Aorta (tissue), 5 donors: ENCODE measurements at regions of chr6 and their contacts with region 1.

Region 1: GRCh38 chr6:118387764-118388701 is 160.1 kb upstream of the PLN start:
- DNase-seq: no peak
- ATAC-seq: no peak
- H3K4me3 ChIP-seq: peak overlapping the region in 1 of 2 donors; percentile 10
- H3K27ac ChIP-seq: no peak overlapping the region
- H3K4me1 ChIP-seq: peaks cover 0 to 4% of the 10 kb centered on the region in 2 donors
- H3K27me3 ChIP-seq: no peaks in the 10 kb centered on the region

Region 2: DNA sequence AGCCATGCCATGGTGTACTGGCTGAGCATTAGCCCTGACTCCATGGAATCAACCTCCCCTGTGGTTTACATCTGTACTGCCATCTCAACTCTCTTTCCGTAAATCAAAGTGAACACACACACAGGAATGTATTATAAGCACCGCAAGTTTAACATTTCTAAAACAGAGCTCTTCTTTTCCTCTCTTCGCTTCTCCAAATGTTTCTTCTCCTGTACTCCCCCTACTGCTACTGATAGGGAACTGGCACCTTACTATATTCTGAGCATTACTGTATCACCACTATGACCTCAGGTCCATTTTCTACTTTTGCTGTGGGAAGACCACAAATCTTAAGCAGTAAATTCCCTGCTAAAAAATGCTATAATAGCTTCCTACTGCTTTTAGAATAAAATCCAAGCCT is 611.6 kb before region 1 on chr6:
- intact Hi-C with region 1: no loop called
- DNase-seq: no peak
- ATAC-seq: no peak
- H3K4me3 ChIP-seq: no peak overlapping the region
- H3K27ac ChIP-seq: no peak overlapping the region
- H3K4me1 ChIP-seq: no peaks in the 10 kb centered on the region
- H3K27me3 ChIP-seq: no peaks in the 10 kb centered on the region

Region 3: GRCh38 chr6:118298476-118299427 is 89.3 kb before region 1 on chr6:
- intact Hi-C with region 1: loop called in 1 of 2 experiments (anchors 10 kb)
- DNase-seq: no peak
- ATAC-seq: peak; percentile 2
- H3K4me3 ChIP-seq: no peak overlapping the region
- H3K27ac ChIP-seq: peak overlapping the region; percentile 88 to 91
- H3K4me1 ChIP-seq: peaks cover 5 to 6% of the 10 kb centered on the region in 2 donors
- H3K27me3 ChIP-seq: no peaks in the 10 kb centered on the region

Region 4: GRCh38 chr6:118325220-118325860 is 62.7 kb before region 1 on chr6:
- intact Hi-C with region 1: loop called in 1 of 2 experiments (anchors 5 kb)
- DNase-seq: peak; percentile 76 to 85
- ATAC-seq: peak; percentile 70
- H3K4me3 ChIP-seq: no peak overlapping the region
- H3K27ac ChIP-seq: peak overlapping the region in 1 of 2 donors; percentile 58
- H3K4me1 ChIP-seq: peaks cover 2 to 13% of the 10 kb centered on the region in 2 donors
- H3K27me3 ChIP-seq: no peaks in the 10 kb centered on the region

Region 5: DNA sequence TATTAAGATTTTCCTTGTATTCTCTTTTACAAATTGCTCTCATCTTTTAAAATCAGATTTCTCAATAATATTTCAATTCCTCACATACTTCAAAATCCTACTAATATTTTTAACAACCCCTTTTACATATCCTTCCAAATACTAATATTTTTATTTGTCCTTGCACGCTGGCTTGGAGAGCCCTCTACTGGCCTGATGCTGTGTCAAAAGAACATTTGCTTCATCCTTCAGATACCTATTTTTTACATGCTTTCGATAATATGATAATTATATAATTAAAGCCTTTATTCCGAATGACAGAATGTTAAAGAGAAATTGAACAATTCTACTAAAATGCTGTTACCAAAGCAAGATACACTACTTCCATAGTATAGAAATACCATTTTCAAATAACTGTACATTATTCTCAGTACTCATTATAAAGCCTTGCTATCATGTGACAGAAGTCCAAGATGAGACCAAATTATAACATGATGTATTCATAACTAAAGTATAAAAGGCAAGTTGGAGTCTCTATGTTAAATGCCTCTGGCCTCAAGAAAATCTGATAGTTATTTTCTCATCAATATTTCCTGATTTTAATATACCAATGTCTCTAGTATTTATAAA is 121.1 kb after region 1 on chr6:
- intact Hi-C with region 1: loop called in 1 of 2 experiments (anchors 10 kb)
- DNase-seq: no peak
- ATAC-seq: no peak
- H3K4me3 ChIP-seq: no peak overlapping the region
- H3K27ac ChIP-seq: no peak overlapping the region
- H3K4me1 ChIP-seq: peaks cover 2 to 3% of the 10 kb centered on the region in 2 donors
- H3K27me3 ChIP-seq: no peaks in the 10 kb centered on the region

Region 6: GRCh38 chr6:118618679-118619377 is 230.8 kb after region 1 on chr6:
- intact Hi-C with region 1: no loop called
- DNase-seq: peak; percentile 55 to 82
- ATAC-seq: peak; percentile 88
- H3K4me3 ChIP-seq: no peak overlapping the region
- H3K27ac ChIP-seq: no peak overlapping the region
- H3K4me1 ChIP-seq: no peaks in the 10 kb centered on the region
- H3K27me3 ChIP-seq: no peaks in the 10 kb centered on the region